Activated T-helper 1 cell treated with anti-CD3 and anti-CD28 coated beads, Interleukin-12 subunit alpha, Interleukin-12 subunit beta, Interleukin-2, Interleukin-4 antibody, amounts not matched to agents 30 ng/mL and 10 ng/mL and 1 ng/mL, durations not matched to agents 14 hours and 24 hours and 36 hours (primary cell): ENCODE measurements at regions of chr2 and their contacts with region 1.

Region 1: DNA sequence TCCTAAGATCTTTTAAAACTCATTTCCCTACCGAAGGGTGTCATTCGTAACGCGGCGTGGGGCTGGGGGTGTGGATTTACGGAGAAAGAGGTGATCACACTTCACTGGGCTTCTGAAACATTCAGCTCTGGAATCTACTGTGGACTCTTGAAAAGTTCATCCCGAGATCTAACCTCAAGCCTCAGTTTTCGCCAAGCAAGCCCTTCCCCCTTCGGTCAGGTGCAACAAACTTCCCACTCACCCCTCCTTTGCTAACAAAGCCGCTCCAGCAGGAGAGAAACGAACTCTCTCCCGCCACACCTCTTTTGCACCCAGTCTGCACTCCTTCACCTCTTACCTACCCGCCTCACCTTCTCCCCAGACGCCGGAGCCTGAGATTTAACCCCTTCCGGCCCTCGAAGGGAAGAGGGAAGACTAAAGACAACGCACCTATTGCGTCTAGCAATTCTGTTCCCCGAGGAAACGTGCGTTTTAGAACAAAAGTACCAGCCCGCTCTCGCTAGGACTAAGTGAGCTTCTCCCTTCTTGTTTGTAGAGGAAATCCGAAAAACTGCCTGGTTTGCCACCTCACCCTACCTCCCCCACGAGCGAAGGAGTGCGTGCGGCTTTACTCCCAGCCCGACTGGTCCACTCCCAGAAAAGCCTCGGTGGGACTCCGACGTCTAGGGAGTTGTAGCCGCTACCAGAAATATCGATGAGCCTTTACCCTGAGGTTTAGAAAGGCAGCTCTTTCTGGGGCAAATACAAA is 538 bp upstream of the PEX13 start:
- DNase-seq: peak; percentile 63
- H3K4me3 Mint-ChIP-seq: peak overlapping the region; percentile 97
- H3K27ac Mint-ChIP-seq: peak overlapping the region; percentile 96
- H3K4me1 Mint-ChIP-seq: peaks cover 37% of the 10 kb centered on the region
- H3K27me3 Mint-ChIP-seq: no peaks in the 10 kb centered on the region

Region 2: GRCh38 chr2:60806988-60807681 is 209.8 kb before region 1 on chr2:
- intact Hi-C with region 1: loop called (anchors 1 kb)
- DNase-seq: no peak
- H3K4me3 Mint-ChIP-seq: peak overlapping the region; percentile 32
- H3K27ac Mint-ChIP-seq: peak overlapping the region; percentile 83
- H3K4me1 Mint-ChIP-seq: peaks cover 46% of the 10 kb centered on the region
- H3K27me3 Mint-ChIP-seq: no peaks in the 10 kb centered on the region

Region 3: GRCh38 chr2:60899230-60899891 is 117.6 kb before region 1 on chr2:
- intact Hi-C with region 1: loop called (anchors 2 kb)
- DNase-seq: no peak
- H3K4me3 Mint-ChIP-seq: peak overlapping the region; percentile 54
- H3K27ac Mint-ChIP-seq: peak overlapping the region; percentile 95
- H3K4me1 Mint-ChIP-seq: peaks cover 35% of the 10 kb centered on the region
- H3K27me3 Mint-ChIP-seq: peaks cover 2% of the 10 kb centered on the region

Region 4: DNA sequence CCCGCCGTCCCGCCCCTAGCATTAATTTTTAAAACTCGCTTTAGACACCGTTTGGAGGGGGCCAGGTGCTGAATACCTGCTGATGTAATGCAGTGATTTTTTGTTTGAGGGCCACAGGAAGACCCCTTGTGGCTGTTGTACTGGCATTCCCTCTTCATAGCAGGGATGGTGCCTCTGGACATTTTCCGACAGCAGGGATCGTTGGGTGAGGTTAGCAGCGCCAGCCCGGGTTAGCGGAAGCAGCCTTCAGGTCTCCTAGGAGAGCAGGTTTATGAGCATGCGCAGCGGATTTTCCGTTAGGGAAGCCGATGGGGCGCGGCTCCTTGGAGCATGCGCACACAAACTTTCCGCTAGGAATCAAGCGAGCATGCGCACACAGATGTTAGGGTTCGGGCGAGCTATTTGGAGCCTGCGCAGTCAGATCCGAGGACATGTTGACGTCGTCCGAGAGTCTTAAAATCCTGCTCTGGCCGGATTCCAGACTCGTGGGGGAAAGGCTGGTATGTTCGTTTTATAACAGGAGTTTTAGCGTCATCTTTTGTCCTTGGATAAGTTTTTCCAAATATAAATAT is 127.8 kb after region 1 on chr2:
- intact Hi-C with region 1: loop called (anchors 1 kb)
- DNase-seq: peak; percentile 92
- H3K4me3 Mint-ChIP-seq: peak overlapping the region; percentile 94
- H3K27ac Mint-ChIP-seq: peak overlapping the region; percentile 94
- H3K4me1 Mint-ChIP-seq: peaks cover 5% of the 10 kb centered on the region
- H3K27me3 Mint-ChIP-seq: no peaks in the 10 kb centered on the region

Region 5: GRCh38 chr2:61694312-61695274 is 677.6 kb after region 1 on chr2:
- intact Hi-C with region 1: loop called (anchors 1 kb)
- DNase-seq: peak; percentile 80
- H3K4me3 Mint-ChIP-seq: peak overlapping the region; percentile 89
- H3K27ac Mint-ChIP-seq: peak overlapping the region; percentile 76
- H3K4me1 Mint-ChIP-seq: peaks cover 14% of the 10 kb centered on the region
- H3K27me3 Mint-ChIP-seq: peaks cover 2% of the 10 kb centered on the region

Region 6: GRCh38 chr2:62202019-62202722 is 1185.2 kb after region 1 on chr2:
- intact Hi-C with region 1: loop called (anchors 5 kb)
- DNase-seq: no peak
- H3K4me3 Mint-ChIP-seq: peak overlapping the region; percentile 50
- H3K27ac Mint-ChIP-seq: peak overlapping the region; percentile 78
- H3K4me1 Mint-ChIP-seq: peaks cover 73% of the 10 kb centered on the region
- H3K27me3 Mint-ChIP-seq: no peaks in the 10 kb centered on the region